Activated naive CD8-positive, alpha-beta T cell treated with anti-CD3 and anti-CD28 coated beads, Interleukin-2, amount 10 ng/mL, durations not matched to agents 7 days and 5 days (primary cell): ENCODE measurements at regions of chr19 and their contacts with region 1.

Region 1: DNA sequence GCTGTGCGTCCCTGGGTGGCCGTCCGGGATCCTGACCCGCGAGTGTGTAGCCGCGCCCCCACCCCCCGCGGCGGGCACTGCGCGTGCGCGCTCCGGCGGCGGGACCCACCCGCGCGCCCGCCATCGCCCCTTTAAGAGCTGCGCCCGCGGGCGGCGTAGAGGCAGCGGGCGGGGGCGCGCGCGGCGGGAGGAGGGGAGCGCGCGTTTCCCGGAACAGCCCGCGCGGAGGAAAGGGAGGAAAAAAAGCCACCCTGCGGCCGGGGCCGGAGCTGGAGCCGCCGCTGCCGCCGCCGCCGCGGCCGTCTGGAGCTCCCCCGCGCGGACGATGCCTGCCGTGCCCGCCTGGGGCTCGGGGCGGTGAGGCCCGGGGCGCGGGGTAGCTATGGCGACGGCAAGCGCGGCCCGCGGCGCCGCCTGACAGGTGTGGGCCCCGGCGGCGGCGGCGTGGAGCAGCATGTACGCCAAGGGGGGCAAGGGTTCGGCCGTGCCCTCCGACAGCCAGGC is at the start of gene SSBP4:
- DNase-seq: peak; percentile 93
- ATAC-seq: peak; percentile 27
- H3K4me3 Mint-ChIP-seq: peak within 1 kb of the TSS; percentile 99
- H3K27ac Mint-ChIP-seq: peak within 1 kb of the TSS; percentile 93
- H3K4me1 Mint-ChIP-seq: peaks cover 68% of the 10 kb centered on the region
- H3K27me3 Mint-ChIP-seq: no peaks in the 10 kb centered on the region
- total RNA-seq, gene SSBP4: 152 to 158 TPM

Region 2: DNA sequence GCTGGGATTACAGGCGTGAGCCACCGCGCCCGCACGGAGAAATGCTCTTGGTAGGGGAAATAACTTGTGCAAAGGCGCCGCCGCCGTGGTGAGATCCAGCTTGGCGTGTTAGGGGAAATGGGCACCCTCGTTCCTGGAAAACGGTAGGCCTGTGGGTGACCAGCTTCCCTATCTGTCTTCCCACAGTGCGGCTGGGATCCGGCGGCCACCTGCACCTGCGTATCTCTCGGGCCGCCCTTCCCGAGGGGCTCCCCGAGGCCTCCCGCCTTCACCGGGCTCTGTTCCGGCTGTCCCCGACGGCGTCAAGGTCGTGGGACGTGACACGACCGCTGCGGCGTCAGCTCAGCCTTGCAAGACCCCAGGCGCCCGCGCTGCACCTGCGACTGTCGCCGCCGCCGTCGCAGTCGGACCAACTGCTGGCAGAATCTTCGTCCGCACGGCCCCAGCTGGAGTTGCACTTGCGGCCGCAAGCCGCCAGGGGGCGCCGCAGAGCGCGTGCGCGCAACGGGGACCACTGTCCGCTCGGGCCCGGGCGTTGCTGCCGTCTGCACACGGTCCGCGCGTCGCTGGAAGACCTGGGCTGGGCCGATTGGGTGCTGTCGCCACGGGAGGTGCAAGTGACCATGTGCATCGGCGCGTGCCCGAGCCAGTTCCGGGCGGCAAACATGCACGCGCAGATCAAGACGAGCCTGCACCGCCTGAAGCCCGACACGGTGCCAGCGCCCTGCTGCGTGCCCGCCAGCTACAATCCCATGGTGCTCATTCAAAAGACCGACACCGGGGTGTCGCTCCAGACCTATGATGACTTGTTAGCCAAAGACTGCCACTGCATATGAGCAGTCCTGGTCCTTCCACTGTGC is 30.9 kb before region 1 on chr19:
- POLR2A ChIA-PET with region 1: interaction called, 14 read pairs
- DNase-seq: peak; percentile 90
- ATAC-seq: peak; percentile 87
- H3K4me3 Mint-ChIP-seq: peak overlapping the region; percentile 77
- H3K27ac Mint-ChIP-seq: no peak overlapping the region
- H3K4me1 Mint-ChIP-seq: peaks cover 10% of the 10 kb centered on the region
- H3K27me3 Mint-ChIP-seq: peaks cover 61% of the 10 kb centered on the region

Region 3: GRCh38 chr19:18401580-18402112 is 17.6 kb before region 1 on chr19:
- POLR2A ChIA-PET with region 1: interaction called, 12 read pairs
- DNase-seq: no peak
- ATAC-seq: peak; percentile 48
- H3K4me3 Mint-ChIP-seq: peak overlapping the region; percentile 48
- H3K27ac Mint-ChIP-seq: peak overlapping the region; percentile 69
- H3K4me1 Mint-ChIP-seq: peaks cover 18% of the 10 kb centered on the region
- H3K27me3 Mint-ChIP-seq: peaks cover 13% of the 10 kb centered on the region